Adrenal gland (tissue), 19 donors: ENCODE measurements at regions of chr1 and their contacts with region 1.

Region 1: DNA sequence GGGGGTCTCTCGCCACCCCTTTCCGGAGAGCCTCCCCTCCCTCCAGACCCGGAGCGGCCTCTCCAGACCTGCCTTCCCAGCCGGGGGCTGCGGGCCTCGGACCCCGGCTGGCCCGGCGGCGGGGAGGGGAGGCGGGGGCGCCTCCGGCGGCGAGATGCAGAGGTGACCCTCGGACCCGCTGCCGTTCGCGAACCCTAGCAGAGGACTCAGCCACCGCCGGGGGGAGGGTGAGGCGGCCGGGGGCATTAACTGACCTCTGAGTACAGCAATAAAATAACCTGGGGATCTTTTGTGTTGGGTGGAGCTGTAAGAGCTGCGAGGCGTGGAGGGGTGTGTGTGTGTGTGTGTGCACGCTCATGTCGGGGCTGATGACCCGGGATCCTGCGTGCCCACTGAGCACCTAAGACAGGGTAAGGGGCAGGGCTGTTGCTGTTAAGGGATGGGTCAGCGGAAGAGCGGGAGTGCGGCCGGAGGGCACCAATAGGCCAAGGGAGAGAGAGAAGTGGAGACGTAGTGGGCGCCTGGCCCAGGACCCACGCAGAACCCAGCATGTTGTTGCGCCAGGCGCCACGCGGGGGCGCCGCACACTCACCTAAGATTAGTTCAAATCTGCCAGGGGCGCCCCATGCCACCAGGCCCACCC is 6.3 kb downstream of the HAPLN2 start:
- DNase-seq: peak in 6 of 7 donors; percentile 46 to 74 (median 56)
- H3K4me3 ChIP-seq: peak overlapping the region in 1 of 4 donors; percentile 46
- H3K27ac ChIP-seq: no peak overlapping the region
- H3K4me1 ChIP-seq: peaks cover 0 to 23% of the 10 kb centered on the region in 2 donors
- H3K27me3 ChIP-seq: peaks cover 44% of the 10 kb centered on the region
- CTCF ChIP-seq: peak; percentile 66 to 86 (median 73)
- POLR2A ChIP-seq: no peak

Region 2: DNA sequence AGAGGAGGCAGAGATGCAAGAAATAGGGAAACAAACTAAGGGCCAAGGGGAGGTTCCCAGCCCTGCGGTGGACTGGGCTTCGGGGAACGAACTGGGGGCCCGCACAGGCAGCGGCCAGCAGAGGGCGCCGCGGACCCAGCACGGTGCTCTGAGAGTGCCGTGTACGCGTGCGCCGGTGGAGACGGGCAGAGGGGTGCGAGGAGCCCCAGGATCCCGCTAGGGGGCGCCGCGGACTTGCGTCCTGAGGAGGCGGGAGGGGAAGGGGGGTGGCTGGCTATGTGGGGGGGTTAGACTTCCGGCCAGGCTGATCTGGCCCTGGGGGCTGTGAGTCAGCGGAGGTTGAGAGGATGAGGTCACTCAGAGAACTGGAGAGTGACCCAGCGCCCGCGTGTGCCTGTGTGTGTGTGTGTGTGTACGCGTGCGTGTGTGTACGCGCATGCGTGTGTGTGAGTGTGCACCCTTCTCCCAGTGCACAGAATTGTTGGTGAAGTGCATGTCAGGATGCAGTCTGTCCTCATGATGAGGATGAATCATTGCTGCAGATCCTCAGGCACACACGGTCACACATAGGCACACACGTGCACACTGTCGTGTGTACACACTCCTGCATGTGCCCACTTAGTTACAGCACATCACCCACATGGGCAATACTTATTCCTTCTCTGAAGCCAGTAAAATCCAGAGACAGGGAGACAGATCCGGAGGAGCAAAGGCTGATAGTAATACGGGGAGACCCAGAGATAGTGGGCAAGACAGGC is 34.6 kb after region 1 on chr1:
- intact Hi-C with region 1: loop called (anchors 2 to 5 kb)
- DNase-seq: peak; percentile 97 to 99 (median 98)
- H3K4me3 ChIP-seq: peak overlapping the region in 1 of 4 donors; percentile 53
- H3K27ac ChIP-seq: peak overlapping the region; percentile 42 to 93 (median 89)
- H3K4me1 ChIP-seq: peaks cover 42 to 75% of the 10 kb centered on the region in 2 donors
- H3K27me3 ChIP-seq: no peaks in the 10 kb centered on the region
- CTCF ChIP-seq: peak; percentile 98 to 100 (median 99)
- POLR2A ChIP-seq: peak in 1 of 2 donors; percentile 54